ENCODE measurements at regions of chr12 and their contacts with region 1.

Region 1: DNA sequence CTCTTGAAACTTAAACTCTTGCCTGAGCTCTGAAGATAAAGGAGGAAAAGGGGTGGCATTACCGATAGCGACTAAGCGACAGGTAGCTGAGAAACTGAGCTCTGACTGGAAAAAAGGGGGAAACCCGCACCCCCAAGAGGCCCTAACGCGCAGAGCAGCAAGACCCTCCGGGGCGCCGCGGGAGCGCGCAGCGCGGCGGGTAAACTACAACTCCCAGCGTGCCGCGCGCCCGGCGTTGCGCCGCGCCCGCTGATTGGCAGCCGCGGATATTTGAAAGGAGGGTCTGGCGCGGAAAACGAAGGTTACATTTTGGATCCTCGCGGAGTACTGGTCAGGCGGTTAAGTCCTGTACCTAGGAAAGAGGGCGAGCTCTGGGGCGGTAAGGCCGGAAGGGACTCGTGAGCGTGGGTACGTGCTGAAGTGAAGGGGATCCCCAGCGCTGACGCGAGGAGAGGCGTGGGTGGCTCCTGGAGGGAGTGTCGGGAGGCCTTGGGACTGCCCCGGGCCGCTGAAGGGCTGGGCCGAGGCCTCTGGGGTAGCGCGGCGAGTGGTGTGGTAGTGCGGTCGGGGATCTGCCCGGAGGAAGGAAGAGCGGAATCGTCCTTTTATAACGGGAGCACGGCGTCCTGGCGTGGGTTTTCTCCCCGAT is at the start of gene ESPL1:
- DNase-seq: peak; percentile 92
- ATAC-seq: peak; percentile 93
- H3K4me3 ChIP-seq: peak within 1 kb of the TSS; percentile 63 to 90 (median 70)
- H3K4me3 Mint-ChIP-seq: peak within 1 kb of the TSS; percentile 97
- H3K27ac ChIP-seq: peak within 1 kb of the TSS; percentile 68 to 92
- H3K27ac Mint-ChIP-seq: peak within 1 kb of the TSS; percentile 87
- H3K4me1 ChIP-seq: peaks cover 13 to 20% of the 10 kb centered on the region in 2 donors
- H3K4me1 Mint-ChIP-seq: peaks cover 21% of the 10 kb centered on the region
- H3K27me3 ChIP-seq: no peaks in the 10 kb centered on the region
- H3K27me3 Mint-ChIP-seq: no peaks in the 10 kb centered on the region
- CTCF ChIP-seq: peak; percentile 49
- total RNA-seq, gene ESPL1: 1.7 and 2.4 TPM in 2 replicates

Region 2: GRCh38 chr12:53005986-53006809 is 261.9 kb before region 1 on chr12 and contains the start of gene EIF4B:
- CTCF ChIA-PET with region 1: no interaction called
- POLR2A ChIA-PET with region 1: no interaction called
- intact Hi-C with region 1: no loop called
- DNase-seq: peak; percentile 100
- ATAC-seq: peak; percentile 91
- H3K4me3 ChIP-seq: peak within 1 kb of the TSS; percentile 72 to 100 (median 82)
- H3K4me3 Mint-ChIP-seq: peak within 1 kb of the TSS; percentile 98
- H3K27ac ChIP-seq: peak within 1 kb of the TSS; percentile 79 to 92
- H3K27ac Mint-ChIP-seq: peak within 1 kb of the TSS; percentile 98
- H3K4me1 ChIP-seq: peaks cover 38 to 46% of the 10 kb centered on the region in 2 donors
- H3K4me1 Mint-ChIP-seq: peaks cover 44% of the 10 kb centered on the region
- H3K27me3 ChIP-seq: no peaks in the 10 kb centered on the region
- H3K27me3 Mint-ChIP-seq: no peaks in the 10 kb centered on the region
- CTCF ChIP-seq: no peak
- total RNA-seq, gene EIF4B: 631 and 674 TPM in 2 replicates

Region 3: GRCh38 chr12:53200458-53201176 is 67.5 kb before region 1 on chr12:
- CTCF ChIA-PET with region 1: interaction called, 14 read pairs
- POLR2A ChIA-PET with region 1: no interaction called
- intact Hi-C with region 1: no loop called
- DNase-seq: peak; percentile 71
- ATAC-seq: peak; percentile 59
- H3K4me3 ChIP-seq: peak overlapping the region in 3 of 5 experiments; percentile 17 to 54 (median 23)
- H3K4me3 Mint-ChIP-seq: peak overlapping the region; percentile 70
- H3K27ac ChIP-seq: peak overlapping the region; percentile 39 to 58
- H3K27ac Mint-ChIP-seq: peak overlapping the region; percentile 80
- H3K4me1 ChIP-seq: peaks cover 79 to 86% of the 10 kb centered on the region in 2 donors
- H3K4me1 Mint-ChIP-seq: peaks cover 68% of the 10 kb centered on the region
- H3K27me3 ChIP-seq: no peaks in the 10 kb centered on the region
- H3K27me3 Mint-ChIP-seq: no peaks in the 10 kb centered on the region
- CTCF ChIP-seq: no peak

Region 4: DNA sequence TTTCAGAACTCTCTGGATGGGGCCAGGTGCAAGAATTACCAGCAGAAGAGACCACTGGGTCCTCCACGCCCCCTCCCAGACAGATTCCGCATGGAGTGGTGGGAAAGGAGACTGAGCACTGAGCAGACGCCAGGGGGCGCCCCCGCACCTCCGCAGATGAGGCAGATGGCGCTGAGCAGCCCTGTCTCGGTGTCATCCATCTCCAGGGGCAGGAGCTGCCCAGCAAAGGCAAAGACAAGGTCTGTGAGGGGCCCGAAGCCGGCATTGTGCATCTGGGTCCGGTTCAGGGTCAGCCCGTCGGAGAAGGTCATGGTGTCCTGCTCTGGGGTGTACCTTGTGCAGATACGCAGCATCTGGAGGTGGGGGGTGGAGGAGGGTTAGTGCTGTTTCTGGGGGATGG is 54.8 kb before region 1 on chr12:
- CTCF ChIA-PET with region 1: interaction called, 272 read pairs
- POLR2A ChIA-PET with region 1: interaction called, 7 read pairs
- intact Hi-C with region 1: loop called (anchors 1 kb)
- DNase-seq: peak; percentile 87
- ATAC-seq: peak; percentile 65
- H3K4me3 ChIP-seq: no peak overlapping the region
- H3K4me3 Mint-ChIP-seq: no peak overlapping the region
- H3K27ac ChIP-seq: no peak overlapping the region
- H3K27ac Mint-ChIP-seq: peak overlapping the region; percentile 46
- H3K4me1 ChIP-seq: peaks cover 57 to 65% of the 10 kb centered on the region in 2 donors
- H3K4me1 Mint-ChIP-seq: peaks cover 70% of the 10 kb centered on the region
- H3K27me3 ChIP-seq: no peaks in the 10 kb centered on the region
- H3K27me3 Mint-ChIP-seq: no peaks in the 10 kb centered on the region
- CTCF ChIP-seq: peak; percentile 97

Region 5: DNA sequence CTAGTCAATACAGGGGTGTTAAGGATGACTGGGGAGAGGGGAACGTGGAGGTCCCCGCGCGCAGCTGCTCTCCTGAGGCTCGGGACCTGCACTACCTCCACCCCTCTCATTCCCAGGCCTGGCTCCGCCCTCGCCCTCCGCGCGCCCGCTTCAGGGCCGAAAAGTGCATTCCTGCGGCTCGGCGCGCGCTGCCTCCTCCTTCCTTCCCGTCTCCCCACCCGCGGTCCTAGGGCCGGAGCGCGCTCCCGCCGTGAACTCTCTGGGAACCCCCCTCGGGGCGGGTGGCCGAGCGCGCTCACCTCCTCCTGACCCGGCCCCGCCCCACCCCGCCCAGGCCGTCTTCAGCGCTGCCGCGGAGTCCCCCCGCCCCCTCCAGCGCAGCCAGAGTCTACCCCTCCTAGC is 47.3 kb before region 1 on chr12:
- CTCF ChIA-PET with region 1: interaction called, 272 read pairs
- POLR2A ChIA-PET with region 1: interaction called, 29 read pairs
- intact Hi-C with region 1: loop called (anchors 1 kb)
- DNase-seq: peak; percentile 92
- ATAC-seq: peak; percentile 76
- H3K4me3 ChIP-seq: peak overlapping the region; percentile 63 to 100 (median 90)
- H3K4me3 Mint-ChIP-seq: peak overlapping the region; percentile 97
- H3K27ac ChIP-seq: peak overlapping the region; percentile 93 to 95
- H3K27ac Mint-ChIP-seq: peak overlapping the region; percentile 98
- H3K4me1 ChIP-seq: peaks cover 39 to 56% of the 10 kb centered on the region in 2 donors
- H3K4me1 Mint-ChIP-seq: peaks cover 53% of the 10 kb centered on the region
- H3K27me3 ChIP-seq: no peaks in the 10 kb centered on the region
- H3K27me3 Mint-ChIP-seq: no peaks in the 10 kb centered on the region
- CTCF ChIP-seq: no peak

Region 6: DNA sequence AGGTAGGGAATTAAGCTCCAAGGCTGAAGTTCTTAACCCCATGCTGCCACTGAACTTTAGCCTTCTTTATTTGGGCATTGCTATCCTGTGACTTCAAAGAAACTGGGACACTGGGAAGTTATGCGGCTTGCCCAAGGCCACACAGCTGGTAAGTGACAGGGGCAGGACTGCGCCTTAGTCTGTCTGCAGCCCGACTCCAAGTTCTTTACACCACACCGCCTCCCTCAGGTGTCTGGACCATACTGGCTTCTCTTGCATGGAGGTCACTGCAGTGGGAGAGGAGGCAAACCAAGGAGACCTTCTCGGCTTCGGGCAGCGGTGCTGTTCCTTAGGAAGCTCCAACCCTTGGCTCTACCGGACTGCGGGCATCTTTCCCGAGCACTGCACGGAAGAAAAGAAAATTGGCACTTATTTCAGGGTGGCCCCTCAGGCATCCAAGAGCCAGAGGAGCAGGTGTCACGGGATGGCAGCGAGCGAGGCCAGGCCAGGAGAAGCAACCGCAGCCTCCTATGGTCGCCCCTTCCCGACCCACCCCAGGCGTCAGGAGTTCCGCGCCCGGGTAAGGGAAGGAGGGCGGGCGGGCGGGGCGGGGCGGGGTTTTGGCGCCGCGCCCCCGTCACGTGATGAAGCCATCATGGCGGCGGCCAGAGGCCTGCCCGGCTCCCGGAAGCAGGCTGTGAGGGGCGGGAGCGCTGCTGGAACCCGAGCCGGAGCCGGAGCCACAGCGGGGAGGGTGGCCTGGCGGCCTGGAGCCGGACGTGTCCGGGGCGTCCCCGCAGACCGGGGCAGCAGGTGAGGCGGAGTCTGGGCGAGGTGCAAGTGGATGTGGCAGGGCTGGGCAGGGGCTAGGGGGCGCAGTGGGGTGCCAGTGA is 16.4 kb before region 1 on chr12:
- CTCF ChIA-PET with region 1: interaction called, 57 read pairs
- POLR2A ChIA-PET with region 1: interaction called, 5 read pairs
- intact Hi-C with region 1: loop called (anchors 1 kb)
- DNase-seq: peak; percentile 85
- ATAC-seq: peak; percentile 81
- H3K4me3 ChIP-seq: peak overlapping the region; percentile 56 to 95 (median 88)
- H3K4me3 Mint-ChIP-seq: peak overlapping the region; percentile 99
- H3K27ac ChIP-seq: peak overlapping the region; percentile 59 to 92
- H3K27ac Mint-ChIP-seq: peak overlapping the region; percentile 96
- H3K4me1 ChIP-seq: peaks cover 44 to 52% of the 10 kb centered on the region in 2 donors
- H3K4me1 Mint-ChIP-seq: peaks cover 49% of the 10 kb centered on the region
- H3K27me3 ChIP-seq: no peaks in the 10 kb centered on the region
- H3K27me3 Mint-ChIP-seq: no peaks in the 10 kb centered on the region
- CTCF ChIP-seq: peak; percentile 42

Region 7: DNA sequence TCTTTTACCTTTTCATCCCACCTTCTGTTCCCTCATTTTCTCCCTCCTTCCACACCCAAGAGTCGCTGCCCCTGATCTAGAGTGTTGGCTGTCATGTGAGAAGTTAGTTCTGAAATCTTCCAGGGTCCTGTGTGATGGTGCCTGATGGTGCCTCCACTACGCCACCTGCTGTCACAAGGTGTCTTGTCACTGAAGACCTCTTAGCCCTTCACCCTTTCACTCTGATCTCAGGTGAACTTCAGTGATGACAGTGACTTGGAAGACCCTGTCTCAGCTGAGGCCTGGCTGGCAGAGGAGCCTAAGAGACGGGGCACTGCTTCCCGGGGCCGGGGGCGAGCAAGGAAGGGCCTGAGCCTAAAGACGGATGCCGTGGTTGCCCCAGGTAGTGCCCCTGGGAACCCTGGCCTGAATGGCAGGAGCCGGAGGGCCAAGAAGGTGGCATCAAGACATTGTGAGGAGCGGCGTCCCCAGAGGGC is 19.7 kb after region 1 on chr12:
- CTCF ChIA-PET with region 1: interaction called, 59 read pairs
- POLR2A ChIA-PET with region 1: interaction called, 4 read pairs
- intact Hi-C with region 1: no loop called
- DNase-seq: peak; percentile 85
- ATAC-seq: peak; percentile 96
- H3K4me3 ChIP-seq: no peak overlapping the region
- H3K4me3 Mint-ChIP-seq: no peak overlapping the region
- H3K27ac ChIP-seq: no peak overlapping the region
- H3K27ac Mint-ChIP-seq: peak overlapping the region; percentile 28
- H3K4me1 ChIP-seq: no peaks in the 10 kb centered on the region
- H3K4me1 Mint-ChIP-seq: peaks cover 5% of the 10 kb centered on the region
- H3K27me3 ChIP-seq: no peaks in the 10 kb centered on the region
- H3K27me3 Mint-ChIP-seq: no peaks in the 10 kb centered on the region
- CTCF ChIP-seq: peak; percentile 82

Region 8: GRCh38 chr12:53295070-53295890 is 27.2 kb after region 1 on chr12 and contains the start of gene PFDN5:
- CTCF ChIA-PET with region 1: interaction called, 59 read pairs
- POLR2A ChIA-PET with region 1: interaction called, 5 read pairs
- intact Hi-C with region 1: loop called (anchors 1 kb)
- DNase-seq: peak; percentile 92
- ATAC-seq: peak; percentile 90
- H3K4me3 ChIP-seq: peak within 1 kb of the TSS; percentile 64 to 96 (median 82)
- H3K4me3 Mint-ChIP-seq: peak within 1 kb of the TSS; percentile 100
- H3K27ac ChIP-seq: peak within 1 kb of the TSS; percentile 69 to 86
- H3K27ac Mint-ChIP-seq: peak within 1 kb of the TSS; percentile 99
- H3K4me1 ChIP-seq: peaks cover 26 to 39% of the 10 kb centered on the region in 2 donors
- H3K4me1 Mint-ChIP-seq: peaks cover 50% of the 10 kb centered on the region
- H3K27me3 ChIP-seq: no peaks in the 10 kb centered on the region
- H3K27me3 Mint-ChIP-seq: no peaks in the 10 kb centered on the region
- CTCF ChIP-seq: no peak
- total RNA-seq, gene PFDN5: 627 and 654 TPM in 2 replicates

Region 9: GRCh38 chr12:53652366-53652765 is 384.2 kb after region 1 on chr12:
- CTCF ChIA-PET with region 1: no interaction called
- POLR2A ChIA-PET with region 1: no interaction called
- intact Hi-C with region 1: no loop called
- DNase-seq: no peak
- ATAC-seq: no peak
- H3K4me3 ChIP-seq: no peak overlapping the region
- H3K4me3 Mint-ChIP-seq: no peak overlapping the region
- H3K27ac ChIP-seq: no peak overlapping the region
- H3K27ac Mint-ChIP-seq: no peak overlapping the region
- H3K4me1 ChIP-seq: no peaks in the 10 kb centered on the region
- H3K4me1 Mint-ChIP-seq: no peaks in the 10 kb centered on the region
- H3K27me3 ChIP-seq: no peaks in the 10 kb centered on the region
- H3K27me3 Mint-ChIP-seq: no peaks in the 10 kb centered on the region
- CTCF ChIP-seq: no peak